ENCODE measurements at regions of chr4 and their contacts with region 1.

Region 1: GRCh38 chr4:25938787-25939186 is 24.8 kb downstream of the SMIM20 start:
- DNase-seq: no peak
- H3K4me3 Mint-ChIP-seq: peak overlapping the region; percentile 36
- H3K27ac Mint-ChIP-seq: peak overlapping the region; percentile 91
- H3K4me1 Mint-ChIP-seq: peaks cover 37% of the 10 kb centered on the region
- H3K27me3 Mint-ChIP-seq: peaks cover 4% of the 10 kb centered on the region

Region 2: DNA sequence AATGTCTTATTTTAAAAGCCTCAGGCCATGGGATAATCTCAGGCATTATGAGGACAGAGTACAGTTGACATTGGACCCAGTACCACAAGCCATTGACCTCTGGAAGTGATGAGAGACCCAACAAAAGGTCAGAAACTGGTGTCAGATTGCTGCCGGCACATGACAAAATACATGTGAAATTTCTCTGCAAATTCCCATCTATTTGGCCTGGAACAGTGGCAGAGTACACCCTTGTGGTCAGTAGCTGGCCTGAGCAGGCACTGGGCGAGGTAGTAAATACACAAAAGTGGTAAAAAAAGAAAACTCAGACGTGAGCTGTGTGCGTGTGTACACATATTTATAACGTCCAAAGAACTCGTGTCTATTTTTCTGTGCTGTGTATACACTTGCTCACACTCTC is 1509.9 kb before region 1 on chr4:
- intact Hi-C with region 1: no loop called
- DNase-seq: no peak
- H3K4me3 Mint-ChIP-seq: no peak overlapping the region
- H3K27ac Mint-ChIP-seq: no peak overlapping the region
- H3K4me1 Mint-ChIP-seq: no peaks in the 10 kb centered on the region
- H3K27me3 Mint-ChIP-seq: peaks cover 1% of the 10 kb centered on the region

Region 3: DNA sequence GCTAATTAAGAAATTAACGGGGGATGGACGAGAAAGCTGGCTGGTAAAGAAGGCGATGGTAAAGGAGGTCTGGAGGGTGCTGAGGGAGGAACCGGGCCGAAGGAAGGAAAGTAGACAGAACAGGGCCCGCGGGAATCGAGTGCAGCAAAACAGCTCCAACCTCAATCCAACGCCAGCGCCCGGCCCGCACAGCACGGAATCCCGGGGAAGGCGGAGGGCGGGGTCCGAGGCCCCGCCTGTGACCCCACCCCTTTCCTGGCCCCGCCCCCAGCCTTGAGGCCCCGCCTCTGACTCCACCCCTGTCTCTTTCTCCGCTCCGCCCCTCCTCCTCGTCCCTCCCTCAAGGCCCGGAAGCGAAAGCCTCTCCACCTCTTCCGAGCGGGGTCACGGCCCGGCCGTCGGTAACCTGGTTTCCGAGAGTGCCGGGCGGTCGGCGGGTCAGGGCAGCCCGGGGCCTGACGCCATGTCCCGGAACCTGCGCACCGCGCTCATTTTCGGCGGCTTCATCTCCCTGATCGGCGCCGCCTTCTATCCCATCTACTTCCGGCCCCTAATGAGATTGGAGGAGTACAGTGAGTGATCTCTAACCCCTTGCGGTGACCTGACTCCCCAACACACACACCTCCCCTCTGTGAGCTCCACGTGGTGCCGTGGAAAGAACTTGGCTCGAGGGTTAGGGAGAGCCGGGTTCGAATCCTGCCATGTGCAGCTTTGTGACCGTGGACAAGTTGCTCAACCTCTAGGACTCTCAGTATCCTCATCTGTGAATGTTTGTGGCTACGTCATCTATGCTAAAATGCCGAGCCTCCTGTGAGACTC is 24.7 kb before region 1 on chr4 and contains the start of gene SMIM20:
- intact Hi-C with region 1: loop called (anchors 1 kb)
- DNase-seq: peak; percentile 88
- H3K4me3 Mint-ChIP-seq: peak within 1 kb of the TSS; percentile 94
- H3K27ac Mint-ChIP-seq: peak within 1 kb of the TSS; percentile 99
- H3K4me1 Mint-ChIP-seq: peaks cover 24% of the 10 kb centered on the region
- H3K27me3 Mint-ChIP-seq: peaks cover 5% of the 10 kb centered on the region
- total RNA-seq, gene SMIM20: 19.2 and 21.5 TPM in 2 replicates

Region 4: GRCh38 chr4:26009502-26009901 is 70.7 kb after region 1 on chr4:
- intact Hi-C with region 1: loop called (anchors 1 kb)
- DNase-seq: no peak
- H3K4me3 Mint-ChIP-seq: no peak overlapping the region
- H3K27ac Mint-ChIP-seq: peak overlapping the region; percentile 11
- H3K4me1 Mint-ChIP-seq: peaks cover 12% of the 10 kb centered on the region
- H3K27me3 Mint-ChIP-seq: peaks cover 10% of the 10 kb centered on the region

Region 5: GRCh38 chr4:26141911-26142638 is 203.3 kb after region 1 on chr4:
- intact Hi-C with region 1: loop called (anchors 2 kb)
- DNase-seq: no peak
- H3K4me3 Mint-ChIP-seq: peak overlapping the region; percentile 3
- H3K27ac Mint-ChIP-seq: peak overlapping the region; percentile 78
- H3K4me1 Mint-ChIP-seq: peaks cover 67% of the 10 kb centered on the region
- H3K27me3 Mint-ChIP-seq: no peaks in the 10 kb centered on the region

Region 6: DNA sequence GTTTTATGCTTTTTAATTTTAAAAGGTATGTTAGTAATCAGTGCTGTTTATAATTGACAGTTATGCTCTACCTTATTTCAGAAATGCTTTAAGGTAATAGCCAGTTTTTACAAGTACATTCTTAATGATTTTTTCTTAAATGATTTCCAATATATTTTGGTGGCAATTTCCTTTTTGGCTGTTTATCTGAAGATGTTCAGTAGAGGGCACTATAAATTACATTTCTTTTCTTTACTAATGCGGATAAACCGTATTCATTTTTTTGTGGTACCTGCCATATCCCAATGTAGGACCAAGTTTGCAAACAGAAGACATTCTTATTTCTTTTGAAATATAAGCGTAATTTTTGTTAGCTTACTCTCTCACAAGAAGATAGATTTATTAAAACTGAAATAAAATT is 486.1 kb after region 1 on chr4:
- intact Hi-C with region 1: loop called (anchors 5 kb)
- DNase-seq: no peak
- H3K4me3 Mint-ChIP-seq: no peak overlapping the region
- H3K27ac Mint-ChIP-seq: no peak overlapping the region
- H3K4me1 Mint-ChIP-seq: peaks cover 35% of the 10 kb centered on the region
- H3K27me3 Mint-ChIP-seq: no peaks in the 10 kb centered on the region

Region 7: GRCh38 chr4:26878794-26879391 is 940.1 kb after region 1 on chr4:
- intact Hi-C with region 1: loop called (anchors 5 kb)
- DNase-seq: no peak
- H3K4me3 Mint-ChIP-seq: peak overlapping the region; percentile 20
- H3K27ac Mint-ChIP-seq: peak overlapping the region; percentile 89
- H3K4me1 Mint-ChIP-seq: peaks cover 78% of the 10 kb centered on the region
- H3K27me3 Mint-ChIP-seq: no peaks in the 10 kb centered on the region